ENCODE measurements at regions of chr3 and their contacts with region 1.

Region 1: DNA sequence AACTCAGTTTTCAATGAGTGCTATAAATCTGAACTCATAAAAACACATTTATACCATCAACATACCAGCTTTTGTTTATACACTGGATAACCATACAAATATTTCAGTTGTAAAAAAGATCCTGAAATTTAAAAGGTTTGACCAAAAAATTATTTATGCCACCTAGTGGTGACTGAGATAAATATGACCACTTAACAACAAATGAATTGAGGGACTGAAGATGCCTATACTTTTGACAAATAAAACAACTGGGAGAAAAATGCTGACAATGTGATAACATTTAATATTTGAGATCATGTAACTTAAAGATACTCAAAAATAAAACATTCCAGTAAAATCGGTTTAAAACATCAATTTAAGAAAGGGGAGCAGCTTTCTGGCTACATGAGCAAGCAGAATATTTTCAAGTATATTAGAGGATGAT is 30.4 kb downstream of the ATG3 start:
- DNase-seq: no peak
- H3K4me3 ChIP-seq: no peak overlapping the region
- H3K27ac ChIP-seq: no peak overlapping the region
- H3K4me1 ChIP-seq: no peaks in the 10 kb centered on the region
- H3K27me3 ChIP-seq: no peaks in the 10 kb centered on the region
- CTCF ChIP-seq: peak; percentile 40 to 59 (median 57)
- POLR2A ChIP-seq: no peak

Region 2: GRCh38 chr3:112111785-112112402 is 419.5 kb before region 1 on chr3:
- intact Hi-C with region 1: loop called (anchors 10 kb)
- DNase-seq: peak; percentile 66
- H3K4me3 ChIP-seq: no peak overlapping the region
- H3K27ac ChIP-seq: no peak overlapping the region
- H3K4me1 ChIP-seq: no peaks in the 10 kb centered on the region
- H3K27me3 ChIP-seq: no peaks in the 10 kb centered on the region
- CTCF ChIP-seq: peak in 3 of 4 experiments; percentile 48 to 67 (median 64)
- POLR2A ChIP-seq: no peak

Region 3: DNA sequence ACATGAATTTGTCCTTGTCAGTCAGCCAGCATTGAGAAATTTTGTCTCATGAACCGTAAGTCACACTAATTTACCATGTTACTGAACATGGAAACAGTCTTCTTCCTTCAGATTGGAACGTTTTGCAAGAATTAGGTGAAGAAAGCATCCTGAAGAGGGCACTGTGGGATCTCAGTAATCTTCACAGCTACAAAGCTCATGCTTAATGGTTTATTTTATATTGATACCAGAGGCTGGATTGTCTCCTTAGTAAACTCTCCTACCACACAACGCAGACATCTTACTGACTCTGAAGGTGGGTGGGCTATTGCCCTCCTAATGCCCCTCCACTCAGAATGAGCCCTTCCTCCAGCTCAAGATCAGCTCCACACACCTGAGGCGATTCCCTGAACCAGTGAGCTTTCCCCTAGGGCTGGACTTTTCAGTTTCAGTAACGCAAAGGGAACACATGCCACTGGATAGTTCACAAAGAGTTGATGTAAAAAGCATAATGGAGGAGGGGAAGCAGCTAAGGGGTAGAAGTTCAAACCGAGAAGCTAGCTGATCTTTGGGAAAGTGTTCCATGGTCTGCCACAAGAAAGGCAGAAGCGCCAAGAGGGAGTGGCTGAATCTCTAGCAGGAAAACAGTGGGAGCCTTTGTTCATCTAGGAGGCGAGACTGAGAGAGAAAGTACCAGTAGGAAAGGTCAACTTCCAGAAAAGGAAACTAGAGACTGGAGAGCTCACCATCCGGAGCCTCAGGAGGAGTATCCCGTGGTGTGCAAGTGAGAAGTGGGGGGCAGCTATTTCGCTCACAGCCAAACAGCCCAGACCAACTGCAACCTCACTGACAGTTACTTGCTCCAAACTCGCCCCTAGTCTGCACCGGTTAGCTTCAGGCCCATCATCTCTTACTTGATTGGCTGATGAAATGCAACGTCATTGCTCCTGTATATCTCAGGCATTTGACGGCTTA is 237.7 kb before region 1 on chr3 and contains the start of gene SLC9C1:
- intact Hi-C with region 1: loop called (anchors 5 kb)
- DNase-seq: peak; percentile 64
- H3K4me3 ChIP-seq: peak within 1 kb of the TSS in 1 of 2 donors; percentile 8
- H3K27ac ChIP-seq: peak within 1 kb of the TSS; percentile 55 to 62
- H3K4me1 ChIP-seq: no peaks in the 10 kb centered on the region
- H3K27me3 ChIP-seq: no peaks in the 10 kb centered on the region
- CTCF ChIP-seq: peak; percentile 13 to 71 (median 60)
- POLR2A ChIP-seq: no peak
- total RNA-seq, gene SLC9C1: 0.91 TPM in 1 of 2 donors, not detected in the other